ENCODE measurements at regions of chr1 and their contacts with region 1.

Region 1: DNA sequence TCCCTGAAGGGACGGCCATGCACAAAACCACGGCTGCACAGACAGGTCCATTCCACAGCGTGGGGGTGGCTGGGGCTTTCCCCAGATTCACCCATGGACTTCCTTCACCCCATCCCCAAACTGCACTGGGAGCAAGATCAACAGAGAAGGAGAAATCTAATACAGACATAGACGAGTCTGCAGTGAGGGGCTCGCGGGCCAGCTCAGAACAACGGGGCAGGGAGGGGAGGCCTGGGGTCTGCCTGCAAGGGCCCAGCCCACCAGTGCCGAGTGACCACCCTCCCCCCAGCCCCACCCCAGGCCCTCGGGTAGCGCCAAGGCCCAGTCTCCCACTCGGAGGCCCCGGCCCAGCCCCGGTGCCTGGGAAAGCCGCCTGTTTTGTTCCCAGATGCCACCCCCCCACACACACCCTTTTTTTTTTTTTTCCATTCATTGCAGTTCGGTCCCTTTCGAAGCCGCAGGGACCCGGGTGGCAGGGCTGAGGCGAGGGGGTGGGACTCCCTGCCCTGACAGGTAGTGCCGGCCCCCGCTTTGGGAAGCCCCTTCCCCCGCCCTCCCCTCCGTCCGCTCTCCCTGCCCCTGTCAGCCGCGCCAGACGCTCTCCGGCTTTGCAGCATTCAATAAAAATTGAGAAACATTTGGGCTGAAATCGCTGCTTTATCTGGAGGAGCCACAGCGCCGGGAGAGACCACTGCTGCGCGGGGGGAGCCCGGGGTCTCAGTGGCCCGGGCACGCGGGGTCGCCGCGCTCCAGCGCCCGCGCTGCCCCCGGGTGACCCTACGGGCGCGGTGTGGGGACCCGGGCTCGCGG is 543 bp upstream of the EPHB2 start:
- DNase-seq: no peak
- H3K4me3 ChIP-seq: peak overlapping the region; percentile 60
- CTCF ChIP-seq: no peak

Region 2: DNA sequence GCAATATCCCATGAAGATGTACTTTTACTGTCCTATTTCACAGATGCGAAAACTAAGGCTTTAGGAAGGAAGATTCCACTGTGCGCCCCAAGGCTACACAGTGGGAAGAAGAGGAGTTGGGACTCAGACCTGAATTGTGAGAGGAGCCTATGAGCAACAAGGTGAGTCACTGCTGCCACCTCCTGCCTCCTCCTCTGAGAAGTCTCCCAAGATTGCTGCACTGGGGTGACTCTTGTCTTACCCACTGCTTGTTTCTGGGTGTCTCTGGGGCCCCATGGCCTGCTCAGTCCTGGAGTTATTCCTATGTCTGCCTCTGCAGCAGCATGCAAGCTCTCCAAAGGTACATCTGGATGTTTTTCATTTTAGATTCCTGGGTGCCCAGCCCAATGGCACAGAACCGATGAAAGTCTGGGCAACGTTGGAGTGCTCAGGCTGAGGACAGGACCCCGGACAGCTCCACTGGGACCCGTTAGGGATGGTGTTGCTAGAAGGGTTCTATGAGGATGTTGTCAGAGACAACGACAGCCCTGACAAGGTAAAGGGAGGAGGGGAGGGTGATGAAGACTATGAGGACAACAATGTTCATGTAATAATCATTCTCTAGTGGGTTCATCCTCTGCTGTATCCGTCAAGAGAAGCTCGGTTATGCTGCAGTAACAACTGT is 84.7 kb before region 1 on chr1:
- CTCF ChIA-PET with region 1: no interaction called
- POLR2A ChIA-PET with region 1: no interaction called
- DNase-seq: no peak
- H3K4me3 ChIP-seq: no peak overlapping the region
- CTCF ChIP-seq: no peak

Region 3: DNA sequence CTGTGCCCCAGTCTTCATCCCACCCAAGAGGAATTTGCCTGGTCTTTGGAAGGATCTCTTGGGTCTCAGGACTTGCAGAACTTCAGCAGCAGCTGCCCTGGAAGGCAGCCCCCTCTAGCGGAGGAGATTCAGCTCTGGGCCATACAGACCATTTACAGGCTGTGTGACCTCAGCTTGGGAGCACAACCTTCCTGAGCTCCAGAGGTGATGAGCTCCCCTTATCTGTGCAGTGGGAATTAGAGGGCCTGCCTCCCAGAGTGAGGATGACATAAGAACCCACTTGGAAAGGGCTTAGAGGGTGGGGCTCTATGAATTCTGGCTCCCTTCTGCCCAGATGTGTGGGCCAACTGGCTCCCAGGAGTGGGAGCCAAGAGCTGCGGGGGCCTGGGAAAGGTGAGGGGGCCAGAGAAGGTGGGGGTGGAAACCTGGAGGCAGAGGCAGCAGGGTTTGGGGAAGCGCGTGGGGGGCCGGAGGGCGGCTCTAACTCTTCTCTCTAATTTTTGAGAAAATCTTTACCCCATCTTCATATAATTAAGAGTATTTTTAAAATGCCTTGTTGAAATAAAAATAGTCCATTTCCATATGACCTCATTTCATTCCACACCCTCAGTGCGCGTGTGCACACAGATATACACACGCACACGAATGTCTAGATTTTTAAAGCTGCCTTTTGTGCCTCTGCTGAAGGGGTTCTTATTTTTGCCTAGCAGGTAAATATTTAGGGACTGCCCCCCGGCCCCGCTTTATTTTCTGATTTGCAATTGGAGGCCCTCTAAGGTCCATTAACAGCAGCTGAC is 22.0 kb after region 1 on chr1:
- CTCF ChIA-PET with region 1: interaction called, 20 read pairs
- POLR2A ChIA-PET with region 1: no interaction called
- DNase-seq: no peak
- H3K4me3 ChIP-seq: no peak overlapping the region
- CTCF ChIP-seq: peak; percentile 36

Region 4: DNA sequence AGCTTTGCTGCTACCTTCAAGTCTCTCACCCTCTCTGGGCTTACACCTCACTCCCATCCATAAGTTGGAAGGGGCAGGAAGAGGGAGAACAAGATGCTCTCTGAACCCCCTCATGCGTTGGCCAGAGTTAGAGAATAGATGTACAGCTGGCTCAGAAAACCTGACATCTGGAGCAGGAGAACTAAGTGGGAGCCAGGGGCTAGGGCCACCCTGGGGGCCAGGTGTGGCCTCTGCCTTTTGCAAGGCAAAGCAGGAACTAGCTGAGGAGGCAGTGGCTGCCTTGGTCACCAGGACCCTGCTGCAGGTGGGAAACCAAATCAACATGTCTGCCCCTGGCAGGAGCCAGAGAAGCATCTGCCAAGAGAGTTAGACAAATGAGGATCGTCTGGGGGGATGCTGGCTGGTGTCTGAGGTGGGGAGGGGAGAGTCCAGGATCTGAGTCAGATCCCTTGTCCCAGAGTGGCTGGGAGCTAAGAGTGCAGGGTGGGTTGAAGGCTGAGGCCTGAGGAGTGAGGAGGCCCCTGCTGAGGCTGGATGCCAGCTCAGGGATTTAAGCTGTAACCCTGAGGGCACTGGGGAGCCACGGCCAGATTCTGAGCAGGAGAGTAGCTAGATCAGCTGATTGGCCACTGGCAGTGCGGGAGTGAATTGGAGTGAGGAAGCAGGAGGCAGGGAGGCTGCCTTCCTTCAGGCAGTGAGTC is 115.5 kb after region 1 on chr1:
- CTCF ChIA-PET with region 1: no interaction called
- POLR2A ChIA-PET with region 1: no interaction called
- DNase-seq: no peak
- H3K4me3 ChIP-seq: no peak overlapping the region
- CTCF ChIP-seq: no peak